OCI-LY7 (cell line): ENCODE measurements at regions of chr2 and their contacts with region 1.

Region 1: GRCh38 chr2:197113275-197113711 is 186.8 kb upstream of the PGAP1 start:
- DNase-seq: peak; percentile 58
- H3K4me3 ChIP-seq: no peak overlapping the region
- H3K27ac ChIP-seq: no peak overlapping the region
- H3K4me1 ChIP-seq: peaks cover 21% of the 10 kb centered on the region
- CTCF ChIP-seq: peak; percentile 97

Region 2: DNA sequence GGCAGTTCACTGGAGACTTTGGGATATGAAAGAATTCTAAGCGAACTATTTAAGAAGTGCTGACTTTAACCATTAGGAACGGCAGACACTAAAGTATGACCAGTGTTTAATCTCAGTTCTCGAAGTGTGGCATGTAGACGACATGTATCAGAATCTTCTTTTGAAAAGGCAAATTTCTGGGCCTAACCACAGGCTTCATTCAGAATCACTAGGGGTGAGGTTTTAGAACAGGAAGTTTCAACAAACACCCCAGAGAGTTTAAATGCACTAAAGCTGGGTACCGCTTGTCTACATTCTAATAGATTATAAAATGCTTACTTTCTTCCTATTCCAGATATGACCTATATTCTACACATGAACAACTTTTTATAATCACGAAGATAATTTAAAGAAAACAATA is 17.0 kb after region 1 on chr2:
- CTCF ChIA-PET with region 1: no interaction called
- POLR2A ChIA-PET with region 1: interaction called, 13 read pairs
- intact Hi-C with region 1: no loop called
- DNase-seq: peak; percentile 79
- H3K4me3 ChIP-seq: peak overlapping the region; percentile 60
- H3K27ac ChIP-seq: peak overlapping the region; percentile 96
- H3K4me1 ChIP-seq: peaks cover 54% of the 10 kb centered on the region
- CTCF ChIP-seq: no peak

Region 3: DNA sequence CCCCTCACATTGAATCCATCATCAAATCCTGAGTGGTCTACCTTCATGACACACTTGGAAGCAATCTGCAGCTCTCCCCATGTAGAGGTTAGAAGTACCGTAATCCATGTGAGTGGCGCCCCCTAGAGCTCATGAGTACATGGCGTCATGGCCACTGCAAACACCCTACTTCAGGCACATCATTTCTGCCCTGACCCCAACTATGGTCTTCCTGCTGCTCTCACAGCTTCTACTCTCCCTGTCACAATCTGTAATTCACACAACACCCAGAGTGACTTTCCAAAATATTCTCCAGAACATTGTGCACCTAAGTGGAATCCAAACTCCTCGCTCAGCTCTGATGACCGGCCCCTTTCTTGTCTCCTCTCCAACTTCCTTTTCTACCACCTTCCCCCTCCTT is 55.4 kb after region 1 on chr2:
- CTCF ChIA-PET with region 1: interaction called, 41 read pairs
- POLR2A ChIA-PET with region 1: interaction called, 11 read pairs
- intact Hi-C with region 1: loop called (anchors 1 kb)
- DNase-seq: peak; percentile 87
- H3K4me3 ChIP-seq: no peak overlapping the region
- H3K27ac ChIP-seq: peak overlapping the region; percentile 6
- H3K4me1 ChIP-seq: peaks cover 50% of the 10 kb centered on the region
- CTCF ChIP-seq: peak; percentile 97

Region 4: DNA sequence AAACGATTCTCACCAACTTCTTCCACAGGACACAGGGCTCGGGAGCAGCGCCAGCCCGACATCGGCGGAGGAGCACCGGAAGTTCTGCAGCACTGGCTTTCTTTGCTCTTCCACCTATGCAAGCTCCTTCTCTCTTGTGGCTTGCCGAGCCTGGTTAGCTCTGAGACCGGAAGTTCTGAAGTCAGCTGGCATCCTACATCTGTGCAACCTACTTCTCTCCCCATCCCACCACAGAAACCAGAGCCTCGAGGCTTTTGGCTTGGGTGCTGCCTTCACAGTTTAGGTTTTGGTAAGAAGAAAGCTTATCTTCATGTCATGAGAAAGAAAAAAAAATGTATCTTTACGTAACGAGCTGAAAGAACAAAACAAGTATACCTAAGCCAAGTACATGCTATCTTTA is 85.6 kb after region 1 on chr2:
- CTCF ChIA-PET with region 1: no interaction called
- POLR2A ChIA-PET with region 1: interaction called, 10 read pairs
- intact Hi-C with region 1: no loop called
- DNase-seq: peak; percentile 97
- H3K4me3 ChIP-seq: peak overlapping the region; percentile 53
- H3K27ac ChIP-seq: peak overlapping the region; percentile 81
- H3K4me1 ChIP-seq: peaks cover 63% of the 10 kb centered on the region
- CTCF ChIP-seq: no peak

Region 5: GRCh38 chr2:197777823-197778407 is 664.6 kb after region 1 on chr2:
- CTCF ChIA-PET with region 1: no interaction called
- POLR2A ChIA-PET with region 1: no interaction called
- intact Hi-C with region 1: loop called (anchors 10 kb)
- DNase-seq: peak; percentile 47
- H3K4me3 ChIP-seq: no peak overlapping the region
- H3K27ac ChIP-seq: no peak overlapping the region
- H3K4me1 ChIP-seq: no peaks in the 10 kb centered on the region
- CTCF ChIP-seq: peak; percentile 98